Panc1 (cell line): ENCODE measurements at regions of chr22 and their contacts with region 1.

Region 1: GRCh38 chr22:22576244-22576988 is 17.4 kb upstream of the PRAME start:
- DNase-seq: no peak
- ATAC-seq: peak; percentile 88
- H3K4me3 ChIP-seq: no peak overlapping the region
- H3K27ac ChIP-seq: no peak overlapping the region
- H3K4me1 ChIP-seq: no peaks in the 10 kb centered on the region
- H3K27me3 ChIP-seq: no peaks in the 10 kb centered on the region
- CTCF ChIP-seq: peak; percentile 86

Region 2: DNA sequence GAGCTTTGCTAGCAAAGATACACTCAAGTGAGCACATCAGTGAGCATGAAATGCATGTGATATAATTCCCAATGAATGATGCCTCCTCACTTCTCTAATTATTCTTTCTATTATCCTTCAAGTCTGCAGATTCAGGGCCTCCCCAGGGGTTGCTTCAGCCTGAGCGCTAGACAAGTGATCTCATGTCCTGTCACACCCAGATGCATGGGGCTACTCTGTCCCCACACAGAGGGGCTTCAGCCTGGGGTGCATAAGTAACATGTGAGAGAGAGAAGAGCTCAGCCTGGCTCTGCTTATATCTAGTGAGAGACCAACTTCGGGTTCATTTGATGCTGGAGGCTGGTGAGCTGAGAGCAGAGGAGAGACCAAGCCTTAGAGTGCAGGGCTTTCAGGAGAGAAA is 246.6 kb before region 1 on chr22:
- CTCF ChIA-PET with region 1: no interaction called
- POLR2A ChIA-PET with region 1: interaction called, 11 read pairs
- in situ Hi-C with region 1: no loop called
- intact Hi-C with region 1: no loop called
- DNase-seq: no peak
- ATAC-seq: no peak
- H3K4me3 ChIP-seq: no peak overlapping the region
- H3K27ac ChIP-seq: no peak overlapping the region
- H3K4me1 ChIP-seq: no peaks in the 10 kb centered on the region
- H3K27me3 ChIP-seq: peaks cover 9% of the 10 kb centered on the region
- CTCF ChIP-seq: no peak

Region 3: DNA sequence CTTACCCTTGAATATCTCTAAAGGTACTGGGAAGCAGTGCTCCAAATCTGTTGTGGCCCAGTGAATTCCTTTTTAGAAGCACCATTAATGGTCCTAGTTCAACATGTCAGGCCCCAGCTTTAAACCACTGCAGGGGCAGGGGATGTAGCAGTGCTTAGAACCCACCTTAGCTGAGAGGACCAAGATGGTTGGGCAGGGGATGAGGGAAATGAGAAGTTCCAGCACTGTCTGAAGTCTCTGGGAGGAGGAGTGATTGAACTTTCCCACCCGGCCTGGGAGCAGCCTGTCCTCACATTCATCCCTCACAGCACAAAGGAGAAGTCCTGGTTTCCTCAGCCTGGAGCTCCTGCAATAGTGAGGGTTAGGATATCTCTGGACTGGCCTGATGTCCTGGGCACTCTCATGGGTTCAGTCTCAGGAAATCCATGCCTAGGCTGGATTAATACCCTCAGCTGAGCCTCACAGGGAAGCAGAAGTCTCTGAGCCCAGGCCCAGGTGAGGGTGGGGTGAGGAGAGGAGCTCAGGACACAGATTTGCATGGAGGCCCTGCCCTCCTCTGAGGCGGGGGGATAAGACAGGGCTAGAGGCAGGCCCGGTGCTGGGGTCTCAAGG is 11.3 kb after region 1 on chr22:
- CTCF ChIA-PET with region 1: interaction called, 13 read pairs
- POLR2A ChIA-PET with region 1: no interaction called
- in situ Hi-C with region 1: no loop called
- intact Hi-C with region 1: no loop called
- DNase-seq: no peak
- ATAC-seq: no peak
- H3K4me3 ChIP-seq: no peak overlapping the region
- H3K27ac ChIP-seq: no peak overlapping the region
- H3K4me1 ChIP-seq: no peaks in the 10 kb centered on the region
- H3K27me3 ChIP-seq: peaks cover 2% of the 10 kb centered on the region; the same call in 1 of the 2 replicates
- CTCF ChIP-seq: no peak

Region 4: DNA sequence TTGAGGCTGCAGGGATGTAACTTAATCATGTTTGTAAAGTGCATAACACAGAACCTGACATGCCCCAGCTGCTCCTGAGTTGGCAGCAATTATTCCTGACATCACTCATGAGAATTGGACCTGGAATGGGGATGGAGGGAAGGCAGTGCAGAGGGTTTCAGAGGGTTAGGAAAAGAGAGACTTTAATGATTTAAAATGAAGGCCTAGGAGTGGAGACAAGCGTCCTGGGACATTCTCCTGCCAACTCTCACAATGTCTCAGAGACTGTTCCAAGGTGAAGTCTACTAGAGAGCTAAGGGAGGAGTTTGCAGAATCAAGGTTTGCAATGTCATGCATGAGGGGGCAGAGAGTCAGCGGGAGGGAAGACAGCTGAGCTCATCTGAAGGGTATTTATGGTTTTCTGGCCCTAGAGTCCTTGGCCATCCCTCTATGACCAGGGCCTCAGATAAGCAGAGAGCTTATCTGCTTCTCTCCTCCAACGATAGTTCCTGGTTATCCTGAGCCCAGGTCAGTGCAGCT is 104.9 kb after region 1 on chr22:
- CTCF ChIA-PET with region 1: no interaction called
- POLR2A ChIA-PET with region 1: no interaction called
- in situ Hi-C with region 1: no loop called
- intact Hi-C with region 1: no loop called
- DNase-seq: no peak
- ATAC-seq: no peak
- H3K4me3 ChIP-seq: no peak overlapping the region
- H3K27ac ChIP-seq: no peak overlapping the region
- H3K4me1 ChIP-seq: no peaks in the 10 kb centered on the region
- H3K27me3 ChIP-seq: no peaks in the 10 kb centered on the region
- CTCF ChIP-seq: no peak